IMR-90 (cell line): ENCODE measurements at regions of chr1 and their contacts with region 1.

Region 1: DNA sequence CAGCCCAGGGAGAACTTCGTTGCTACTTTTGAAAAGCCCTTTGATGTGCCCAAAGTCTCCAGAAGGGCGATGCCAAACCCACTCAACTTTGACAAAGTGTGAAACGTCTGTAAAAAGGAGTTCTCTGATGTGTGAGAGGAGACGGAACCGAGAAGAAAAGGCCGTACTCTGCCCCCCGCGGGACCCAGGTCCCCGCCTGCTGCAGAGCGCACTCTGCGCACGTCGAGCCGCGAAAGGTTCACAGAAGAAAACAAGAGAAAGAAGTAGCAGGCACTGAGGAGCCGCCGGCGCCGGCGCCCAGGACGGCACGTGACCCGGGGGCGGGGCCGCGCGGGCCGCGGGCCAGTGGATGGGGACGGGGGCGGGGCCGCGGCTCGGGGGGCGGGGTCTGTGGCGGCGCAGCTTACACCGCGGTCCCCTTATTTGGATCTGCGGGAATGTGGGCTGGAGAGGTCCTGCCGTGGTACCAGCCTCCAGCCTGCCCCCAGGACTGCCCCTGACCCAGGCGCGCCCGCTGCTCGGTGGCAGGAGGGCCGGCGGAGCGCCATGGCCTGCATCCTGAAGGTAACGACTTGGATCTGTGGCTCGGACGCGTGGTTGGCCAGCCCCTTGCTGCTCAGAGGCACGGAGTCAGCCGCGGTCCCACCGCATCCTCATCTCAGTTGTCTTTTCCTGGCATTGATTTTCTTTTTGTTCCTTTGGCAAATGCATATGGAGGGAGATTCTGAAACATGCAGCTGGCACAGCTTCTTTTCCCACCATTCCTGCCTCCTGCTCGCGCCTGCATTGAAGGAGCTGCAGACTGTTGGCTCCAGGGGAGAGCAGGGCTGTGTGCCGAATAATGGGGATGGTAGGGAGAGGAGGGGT is at the start of gene ST6GALNAC3:
- DNase-seq: peak; percentile 47
- ATAC-seq: peak; percentile 96
- H3K4me3 ChIP-seq: peak within 1 kb of the TSS; percentile 79
- H3K27ac ChIP-seq: peak within 1 kb of the TSS; percentile 13; the same call in 1 of the 2 replicates
- H3K4me1 ChIP-seq: no peaks in the 10 kb centered on the region
- H3K27me3 ChIP-seq: no peaks in the 10 kb centered on the region
- CTCF ChIP-seq: no peak
- POLR2A ChIP-seq: no peak
- RAD21 ChIP-seq: no peak
- total RNA-seq, gene ST6GALNAC3: 0.56 and 1.3 TPM in 2 replicates

Region 2: GRCh38 chr1:75796376-75797272 is 277.9 kb before region 1 on chr1 and contains the start of gene MSH4:
- CTCF ChIA-PET with region 1: no interaction called
- POLR2A ChIA-PET with region 1: no interaction called
- dilution Hi-C with region 1: no loop called
- in situ Hi-C with region 1: loop called (anchors 10 kb)
- intact Hi-C with region 1: no loop called
- DNase-seq: no peak
- ATAC-seq: peak; percentile 29
- H3K4me3 ChIP-seq: no peak within 1 kb of the TSS
- H3K27ac ChIP-seq: no peak within 1 kb of the TSS
- H3K4me1 ChIP-seq: no peaks in the 10 kb centered on the region
- H3K27me3 ChIP-seq: no peaks in the 10 kb centered on the region
- CTCF ChIP-seq: no peak
- POLR2A ChIP-seq: no peak
- RAD21 ChIP-seq: no peak
- total RNA-seq, gene MSH4: under 0.01 TPM in 2 replicates

Region 3: DNA sequence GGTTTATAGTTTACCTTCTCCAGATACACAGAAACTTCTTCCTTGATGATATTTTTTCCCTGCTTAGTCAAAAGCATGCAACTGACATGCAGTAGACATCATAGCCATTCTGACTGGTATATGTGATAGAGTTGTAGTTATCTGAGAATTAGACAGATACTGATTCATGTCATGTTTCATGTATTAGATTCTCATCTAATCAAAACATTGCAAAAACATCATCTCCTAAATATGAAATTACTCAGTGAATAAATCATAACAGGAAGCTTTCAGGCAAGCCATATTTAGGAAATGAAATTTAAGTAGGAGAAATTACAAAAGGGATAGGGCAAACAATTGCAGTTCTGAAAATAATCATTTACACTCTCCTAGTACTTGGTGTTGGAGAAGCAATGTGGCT is 103.9 kb before region 1 on chr1:
- CTCF ChIA-PET with region 1: no interaction called
- POLR2A ChIA-PET with region 1: no interaction called
- dilution Hi-C with region 1: no loop called
- in situ Hi-C with region 1: no loop called
- intact Hi-C with region 1: no loop called
- DNase-seq: peak; percentile 7
- ATAC-seq: peak; percentile 24; the same call in 1 of the 2 replicates
- H3K4me3 ChIP-seq: no peak overlapping the region
- H3K27ac ChIP-seq: no peak overlapping the region
- H3K4me1 ChIP-seq: no peaks in the 10 kb centered on the region
- H3K27me3 ChIP-seq: no peaks in the 10 kb centered on the region
- CTCF ChIP-seq: no peak
- POLR2A ChIP-seq: no peak
- RAD21 ChIP-seq: no peak

Region 4: DNA sequence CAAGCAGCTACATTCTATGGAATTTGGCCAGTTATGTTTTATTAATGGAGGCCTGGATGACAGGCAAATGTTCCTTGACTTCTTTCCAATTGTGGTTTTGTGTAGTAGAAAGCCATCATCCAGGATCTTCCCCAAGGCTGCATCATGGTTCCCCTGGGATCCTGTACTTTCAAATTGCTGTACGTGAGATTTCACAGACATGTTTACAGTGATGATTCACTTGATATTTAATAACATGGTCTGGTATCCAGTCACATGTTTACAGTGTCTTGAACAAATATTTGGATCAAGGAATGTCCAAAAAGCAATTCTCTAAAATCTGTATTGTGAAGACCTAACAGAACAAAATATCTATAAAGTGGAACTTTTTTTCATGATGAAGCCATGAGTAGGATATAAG is 68.3 kb before region 1 on chr1:
- CTCF ChIA-PET with region 1: no interaction called
- POLR2A ChIA-PET with region 1: no interaction called
- dilution Hi-C with region 1: no loop called
- in situ Hi-C with region 1: no loop called
- intact Hi-C with region 1: loop called (anchors 1 kb)
- DNase-seq: peak; percentile 83
- ATAC-seq: peak; percentile 92
- H3K4me3 ChIP-seq: no peak overlapping the region
- H3K27ac ChIP-seq: no peak overlapping the region
- H3K4me1 ChIP-seq: peaks cover 11% of the 10 kb centered on the region
- H3K27me3 ChIP-seq: no peaks in the 10 kb centered on the region
- CTCF ChIP-seq: no peak
- POLR2A ChIP-seq: no peak
- RAD21 ChIP-seq: no peak